CD4-positive, alpha-beta T cell (primary cell): ENCODE measurements at regions of chr17 and their contacts with region 1.

Region 1: DNA sequence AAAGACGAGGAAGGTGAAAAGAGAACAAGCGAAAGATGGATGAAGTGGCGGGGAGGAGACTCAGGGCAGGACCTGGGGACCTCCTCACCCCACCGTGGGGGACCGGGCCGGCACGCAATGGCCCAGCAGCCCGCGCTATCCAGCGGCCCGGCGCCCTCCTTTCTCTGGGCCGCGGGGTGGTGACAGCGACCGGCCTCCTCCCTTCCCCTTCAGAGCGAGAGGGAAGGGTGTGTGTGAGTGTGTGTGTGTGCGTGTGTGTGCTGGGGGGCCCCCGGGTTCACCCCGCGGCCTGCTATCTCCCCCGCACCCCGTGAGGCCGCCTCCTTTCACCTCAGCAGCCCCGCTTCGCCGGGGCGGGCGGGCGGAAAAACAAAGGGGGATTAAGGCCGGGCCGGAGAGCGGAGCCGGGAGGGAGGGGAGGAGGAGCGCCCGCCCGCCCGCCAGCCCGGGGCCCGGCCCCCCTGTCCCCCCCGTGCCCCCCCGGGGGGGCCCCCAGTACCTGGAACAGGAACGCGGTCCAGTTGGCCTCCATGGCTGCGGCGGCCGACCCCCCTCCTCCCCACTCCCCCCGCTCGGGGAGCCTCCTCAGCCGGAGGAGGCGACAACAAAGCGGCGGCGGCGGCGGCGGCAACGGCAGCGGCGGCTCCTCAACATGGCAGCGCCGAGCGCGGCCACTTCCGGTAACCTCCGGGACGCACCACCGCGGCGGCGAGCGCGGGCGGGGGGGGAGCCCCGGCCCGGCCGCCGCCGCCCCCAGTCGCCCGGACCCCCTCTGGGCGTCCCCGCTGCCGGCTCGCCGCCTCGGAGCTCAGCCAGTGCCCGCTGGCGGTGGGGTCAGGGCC is at the start of gene VEZF1:
- DNase-seq: peak; percentile 67 to 90 (median 78)
- ATAC-seq: peak; percentile 75
- H3K4me3 ChIP-seq: peak within 1 kb of the TSS; percentile 86
- H3K4me3 Mint-ChIP-seq: peak within 1 kb of the TSS; percentile 97
- H3K27ac ChIP-seq: peak within 1 kb of the TSS; percentile 50 to 74
- H3K27ac Mint-ChIP-seq: peak within 1 kb of the TSS; percentile 97
- H3K4me1 ChIP-seq: peaks cover 24% of the 10 kb centered on the region
- H3K4me1 Mint-ChIP-seq: peaks cover 70% of the 10 kb centered on the region
- H3K27me3 ChIP-seq: no peaks in the 10 kb centered on the region
- H3K27me3 Mint-ChIP-seq: no peaks in the 10 kb centered on the region
- CTCF ChIP-seq: no peak
- total RNA-seq, gene VEZF1: 41.6 to 41.7 TPM

Region 2: GRCh38 chr17:57838857-57839570 is 148.8 kb before region 1 on chr17:
- CTCF ChIA-PET with region 1: no interaction called
- POLR2A ChIA-PET with region 1: no interaction called
- intact Hi-C with region 1: no loop called
- DNase-seq: no peak
- ATAC-seq: no peak
- H3K4me3 ChIP-seq: no peak overlapping the region
- H3K4me3 Mint-ChIP-seq: no peak overlapping the region
- H3K27ac ChIP-seq: no peak overlapping the region
- H3K27ac Mint-ChIP-seq: no peak overlapping the region
- H3K4me1 ChIP-seq: no peaks in the 10 kb centered on the region
- H3K4me1 Mint-ChIP-seq: peaks cover 20% of the 10 kb centered on the region
- H3K27me3 ChIP-seq: no peaks in the 10 kb centered on the region
- H3K27me3 Mint-ChIP-seq: no peaks in the 10 kb centered on the region
- CTCF ChIP-seq: no peak

Region 3: GRCh38 chr17:57955183-57955931 is 32.4 kb before region 1 on chr17 and contains the start of gene CUEDC1:
- CTCF ChIA-PET with region 1: interaction called, 5 read pairs
- POLR2A ChIA-PET with region 1: interaction called, 5 read pairs
- intact Hi-C with region 1: loop called in 1 of 2 experiments (anchors 5 kb)
- DNase-seq: peak; percentile 38 to 81 (median 57)
- ATAC-seq: peak; percentile 82
- H3K4me3 ChIP-seq: peak within 1 kb of the TSS; percentile 57
- H3K4me3 Mint-ChIP-seq: peak within 1 kb of the TSS; percentile 86
- H3K27ac ChIP-seq: no peak within 1 kb of the TSS
- H3K27ac Mint-ChIP-seq: no peak within 1 kb of the TSS
- H3K4me1 ChIP-seq: peaks cover 19% of the 10 kb centered on the region
- H3K4me1 Mint-ChIP-seq: peaks cover 25% of the 10 kb centered on the region
- H3K27me3 ChIP-seq: peaks cover 9 to 13% of the 10 kb centered on the region in 2 experiments
- H3K27me3 Mint-ChIP-seq: peaks cover 40% of the 10 kb centered on the region
- CTCF ChIP-seq: no peak
- total RNA-seq, gene CUEDC1: 0.41 to 1.0 TPM

Region 4: GRCh38 chr17:58082870-58083490 is 95.2 kb after region 1 on chr17 and contains the start of gene DYNLL2:
- CTCF ChIA-PET with region 1: no interaction called
- POLR2A ChIA-PET with region 1: interaction called, 7 read pairs
- intact Hi-C with region 1: loop called in 1 of 2 experiments (anchors 5 kb)
- DNase-seq: peak; percentile 81 to 94 (median 90)
- ATAC-seq: peak; percentile 78
- H3K4me3 ChIP-seq: peak within 1 kb of the TSS; percentile 71
- H3K4me3 Mint-ChIP-seq: peak within 1 kb of the TSS; percentile 91
- H3K27ac ChIP-seq: peak within 1 kb of the TSS; percentile 63 to 69
- H3K27ac Mint-ChIP-seq: peak within 1 kb of the TSS; percentile 89
- H3K4me1 ChIP-seq: peaks cover 38% of the 10 kb centered on the region
- H3K4me1 Mint-ChIP-seq: peaks cover 36% of the 10 kb centered on the region
- H3K27me3 ChIP-seq: no peaks in the 10 kb centered on the region
- H3K27me3 Mint-ChIP-seq: no peaks in the 10 kb centered on the region
- CTCF ChIP-seq: no peak
- total RNA-seq, gene DYNLL2: 30.9 to 32.2 TPM

Region 5: GRCh38 chr17:58242171-58242784 is 254.5 kb after region 1 on chr17:
- CTCF ChIA-PET with region 1: no interaction called
- POLR2A ChIA-PET with region 1: no interaction called
- intact Hi-C with region 1: no loop called
- DNase-seq: no peak
- ATAC-seq: no peak
- H3K4me3 ChIP-seq: no peak overlapping the region
- H3K4me3 Mint-ChIP-seq: no peak overlapping the region
- H3K27ac ChIP-seq: no peak overlapping the region
- H3K27ac Mint-ChIP-seq: no peak overlapping the region
- H3K4me1 ChIP-seq: no peaks in the 10 kb centered on the region
- H3K4me1 Mint-ChIP-seq: no peaks in the 10 kb centered on the region
- H3K27me3 ChIP-seq: peaks cover 12 to 13% of the 10 kb centered on the region in 2 experiments
- H3K27me3 Mint-ChIP-seq: peaks cover 65% of the 10 kb centered on the region
- CTCF ChIP-seq: no peak